Activated naive CD4-positive, alpha-beta T cell treated with anti-CD3 and anti-CD28 coated beads for 36 hours (primary cell): ENCODE measurements at regions of chr12 and their contacts with region 1.

Region 1: DNA sequence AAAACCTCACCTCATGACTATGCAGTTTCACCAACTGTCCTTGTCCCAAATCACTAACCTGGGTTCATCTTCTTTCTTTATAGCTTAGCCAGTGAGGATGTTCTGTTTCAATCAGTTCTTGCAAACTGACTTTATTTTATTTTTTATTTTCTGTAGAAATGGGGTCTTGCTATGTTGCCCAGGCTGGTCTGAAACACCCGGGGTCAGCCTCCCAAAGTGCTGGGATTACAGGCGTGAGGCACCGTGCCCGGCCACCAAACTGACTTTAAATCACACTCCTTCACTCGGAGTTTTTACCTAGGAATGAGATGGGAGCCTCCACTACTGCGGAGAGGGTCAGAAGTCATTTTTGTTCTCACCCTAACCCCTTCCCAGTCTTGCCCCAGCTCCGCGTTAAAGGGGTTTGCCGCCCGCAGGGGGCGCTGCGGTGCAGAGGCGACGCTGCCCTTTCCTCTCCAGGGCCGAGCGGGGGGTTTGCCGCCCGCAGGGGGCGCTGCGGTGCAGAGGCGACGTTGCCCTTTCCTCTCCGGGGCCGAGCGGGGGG is 7.0 kb upstream of the B4GALNT3 start:
- DNase-seq: peak; percentile 81
- H3K4me3 Mint-ChIP-seq: no peak overlapping the region
- H3K27ac Mint-ChIP-seq: no peak overlapping the region
- H3K4me1 Mint-ChIP-seq: peaks cover 4% of the 10 kb centered on the region
- H3K27me3 Mint-ChIP-seq: peaks cover 2% of the 10 kb centered on the region

Region 2: DNA sequence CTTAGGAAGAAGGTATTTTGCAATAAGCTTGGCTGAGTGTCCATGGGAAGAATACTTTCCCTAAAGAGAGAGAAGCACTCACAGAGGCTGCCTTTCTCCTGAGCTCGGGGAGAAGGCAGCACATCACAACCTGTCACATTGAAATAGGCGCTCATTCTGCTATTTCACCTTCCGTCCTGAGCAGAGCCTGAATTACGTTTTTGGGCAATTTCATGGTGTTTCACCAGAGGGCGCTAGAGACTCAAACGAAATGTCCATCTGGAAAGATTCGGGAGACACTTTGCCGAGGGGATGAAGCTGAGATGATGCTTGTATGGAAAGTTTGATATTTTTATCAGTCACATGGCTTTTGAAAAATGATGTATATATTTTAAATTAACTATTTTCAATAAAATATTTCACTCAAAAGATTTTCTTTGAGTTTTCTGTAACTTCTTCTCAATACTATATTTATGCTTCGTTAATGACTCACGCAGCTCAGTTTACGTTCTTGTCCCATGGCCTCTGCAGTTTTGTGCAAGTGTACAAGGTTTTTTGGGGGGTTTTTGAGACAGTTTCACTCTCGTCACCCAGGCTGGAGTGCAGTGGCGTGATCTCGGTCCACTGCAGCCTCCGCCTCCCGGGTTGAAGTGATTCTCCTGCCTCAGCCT is 10.4 kb before region 1 on chr12:
- CTCF ChIA-PET with region 1: interaction called, 23 read pairs
- intact Hi-C with region 1: no loop called
- DNase-seq: peak; percentile 64
- H3K4me3 Mint-ChIP-seq: no peak overlapping the region
- H3K27ac Mint-ChIP-seq: no peak overlapping the region
- H3K4me1 Mint-ChIP-seq: no peaks in the 10 kb centered on the region
- H3K27me3 Mint-ChIP-seq: no peaks in the 10 kb centered on the region

Region 3: DNA sequence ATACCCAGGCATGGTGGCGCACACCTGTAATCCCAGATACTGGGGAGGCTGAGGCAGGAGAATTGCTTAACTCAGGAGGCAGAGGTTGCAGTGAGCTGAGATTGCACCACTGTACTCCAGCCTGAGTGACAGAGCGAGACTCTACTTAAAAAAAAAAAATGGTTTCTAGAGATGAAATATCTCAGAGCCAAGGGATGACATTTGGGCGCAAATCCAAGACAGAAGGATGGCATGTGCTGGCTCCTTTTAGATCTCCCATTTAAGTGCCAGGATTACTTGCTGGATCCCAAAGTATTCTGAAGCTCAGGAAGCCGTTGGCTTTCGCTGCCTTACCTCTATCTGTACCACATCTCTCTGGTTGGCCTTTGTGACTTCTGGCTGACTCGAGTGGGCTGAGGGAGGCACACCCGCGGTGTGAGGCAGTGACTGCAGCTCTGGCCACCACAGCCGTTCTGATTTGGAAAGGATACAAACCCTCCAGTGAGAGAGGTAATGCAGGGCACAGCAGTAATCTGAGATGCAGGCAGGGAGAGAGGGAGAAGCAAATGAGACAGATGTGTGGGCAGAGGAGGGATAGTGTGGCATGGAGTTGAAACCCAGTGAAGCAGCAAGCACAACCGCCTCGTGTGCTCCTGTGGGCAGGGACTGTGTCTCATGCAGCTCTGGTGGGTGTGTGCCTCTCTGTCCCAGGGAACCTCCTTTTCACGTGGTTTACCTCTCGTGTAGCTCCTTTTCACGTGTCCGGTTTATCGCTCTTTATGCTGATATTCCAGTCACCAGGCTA is 11.9 kb after region 1 on chr12:
- CTCF ChIA-PET with region 1: interaction called, 17 read pairs
- intact Hi-C with region 1: no loop called
- DNase-seq: no peak
- H3K4me3 Mint-ChIP-seq: no peak overlapping the region
- H3K27ac Mint-ChIP-seq: no peak overlapping the region
- H3K4me1 Mint-ChIP-seq: peaks cover 3% of the 10 kb centered on the region
- H3K27me3 Mint-ChIP-seq: peaks cover 11% of the 10 kb centered on the region

Region 4: GRCh38 chr12:532908-533565 is 80.3 kb after region 1 on chr12:
- CTCF ChIA-PET with region 1: interaction called, 34 read pairs
- intact Hi-C with region 1: no loop called
- DNase-seq: no peak
- H3K4me3 Mint-ChIP-seq: no peak overlapping the region
- H3K27ac Mint-ChIP-seq: no peak overlapping the region
- H3K4me1 Mint-ChIP-seq: no peaks in the 10 kb centered on the region
- H3K27me3 Mint-ChIP-seq: no peaks in the 10 kb centered on the region

Region 5: DNA sequence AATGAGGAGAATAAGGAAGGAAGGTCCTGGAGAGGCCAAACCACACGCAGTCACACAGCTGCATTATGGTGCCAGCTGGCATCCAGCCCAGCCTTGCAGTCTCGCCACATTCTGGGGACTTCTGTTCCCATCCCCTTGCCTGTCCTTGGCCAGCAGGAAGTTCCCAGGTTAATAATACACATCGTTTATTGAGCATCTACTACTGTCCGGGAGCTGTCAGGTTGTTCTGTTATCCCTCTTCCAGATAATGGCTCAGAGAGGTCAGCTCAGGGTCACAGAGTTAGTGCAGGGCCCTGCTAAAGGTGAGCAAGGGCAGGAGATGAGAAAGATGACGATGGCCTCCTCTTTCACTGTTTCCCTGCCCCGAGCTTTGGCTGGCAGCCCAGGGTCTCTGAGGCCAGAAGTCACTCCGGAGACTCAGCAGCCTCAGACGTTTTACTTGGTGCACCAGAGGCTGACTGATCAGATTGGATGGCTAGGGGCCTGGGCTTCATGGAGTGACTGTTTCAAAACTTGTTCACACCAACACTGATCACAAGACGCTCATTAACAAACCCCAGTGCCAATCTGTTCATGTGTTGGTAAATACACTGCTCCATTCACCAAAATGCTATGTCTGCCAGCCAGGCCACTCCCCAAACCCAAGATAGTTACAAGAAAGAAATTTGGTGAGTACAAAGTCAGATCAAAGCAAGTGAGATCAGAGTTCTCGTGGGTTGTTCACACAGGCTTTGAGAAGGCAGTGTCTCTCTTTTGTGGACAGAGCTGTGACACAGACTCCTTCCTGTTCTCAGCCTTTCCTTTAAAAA is 86.2 kb after region 1 on chr12:
- CTCF ChIA-PET with region 1: interaction called, 34 read pairs
- intact Hi-C with region 1: no loop called
- DNase-seq: peak; percentile 46
- H3K4me3 Mint-ChIP-seq: no peak overlapping the region
- H3K27ac Mint-ChIP-seq: no peak overlapping the region
- H3K4me1 Mint-ChIP-seq: peaks cover 28% of the 10 kb centered on the region
- H3K27me3 Mint-ChIP-seq: no peaks in the 10 kb centered on the region

Region 6: GRCh38 chr12:546921-547845 is 94.4 kb after region 1 on chr12:
- CTCF ChIA-PET with region 1: interaction called, 70 read pairs
- intact Hi-C with region 1: loop called (anchors 1 kb)
- DNase-seq: peak; percentile 73
- H3K4me3 Mint-ChIP-seq: no peak overlapping the region
- H3K27ac Mint-ChIP-seq: no peak overlapping the region
- H3K4me1 Mint-ChIP-seq: peaks cover 13% of the 10 kb centered on the region
- H3K27me3 Mint-ChIP-seq: peaks cover 11% of the 10 kb centered on the region

Region 7: DNA sequence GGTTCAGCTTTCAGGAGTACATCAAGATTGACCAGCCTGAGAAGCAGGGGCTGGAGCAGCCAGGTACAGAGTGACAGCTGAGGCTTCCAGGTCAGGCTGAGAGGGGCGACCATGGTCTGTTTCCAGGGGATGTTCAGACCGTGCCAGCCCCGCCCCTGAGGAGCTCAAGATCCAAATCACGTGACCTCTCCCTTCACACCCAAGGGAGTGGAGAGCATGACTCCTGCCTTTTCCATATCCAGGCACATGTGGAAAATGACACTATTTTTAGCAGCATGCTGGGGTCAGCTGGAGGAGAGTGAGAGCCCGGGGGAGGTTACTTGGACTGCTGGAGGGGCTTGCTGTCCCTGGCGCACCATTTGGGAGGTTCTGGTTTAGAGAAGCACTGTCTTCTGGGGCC is 99.7 kb after region 1 on chr12:
- CTCF ChIA-PET with region 1: interaction called, 70 read pairs
- intact Hi-C with region 1: loop called (anchors 1 kb)
- DNase-seq: no peak
- H3K4me3 Mint-ChIP-seq: no peak overlapping the region
- H3K27ac Mint-ChIP-seq: peak overlapping the region; percentile 53
- H3K4me1 Mint-ChIP-seq: peaks cover 26% of the 10 kb centered on the region
- H3K27me3 Mint-ChIP-seq: no peaks in the 10 kb centered on the region